Sigmoid colon (tissue), 7 donors: ENCODE measurements at regions of chr19 and their contacts with region 1.

Region 1: DNA sequence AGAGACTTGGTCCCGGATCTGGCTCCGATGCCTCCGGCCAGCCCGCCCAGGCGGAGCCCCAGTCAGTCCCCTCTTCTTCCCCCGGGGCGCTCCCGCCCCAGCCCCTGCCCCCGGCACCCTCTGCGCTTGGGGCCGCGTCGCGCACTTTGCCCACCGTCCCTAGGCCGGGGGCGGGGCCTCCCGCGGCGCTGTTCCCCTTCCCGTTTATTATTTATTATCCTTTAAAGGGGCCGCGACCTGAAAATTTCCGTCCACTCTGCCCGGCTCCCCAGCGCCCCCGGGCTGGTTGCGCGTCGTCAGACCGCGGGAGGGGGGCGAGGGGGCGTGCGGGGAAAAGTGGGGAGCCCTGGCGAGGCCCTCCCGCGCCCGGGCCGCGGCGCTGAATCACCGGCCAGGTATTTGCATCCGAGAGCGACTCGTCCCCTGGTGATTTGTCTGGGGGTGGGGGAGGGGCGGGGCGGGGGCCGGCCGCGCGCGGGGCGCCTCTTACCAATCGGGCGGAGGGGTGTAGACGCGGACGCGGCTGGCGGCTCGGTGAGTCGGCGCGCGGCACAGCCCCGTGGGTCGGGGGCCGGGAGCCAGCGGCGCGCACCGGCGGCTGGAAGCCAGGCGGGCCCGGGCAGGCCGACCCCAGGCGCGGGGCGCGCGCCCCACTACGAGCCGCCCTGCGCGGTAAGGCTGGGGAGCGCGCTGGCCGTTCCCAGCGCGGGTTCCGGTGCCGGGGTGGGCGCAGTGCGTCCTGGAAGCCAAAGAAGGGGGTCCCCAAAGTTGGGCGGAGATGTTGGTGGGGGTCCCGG is at the start of gene ARID3A:
- DNase-seq: peak; percentile 92
- H3K4me3 ChIP-seq: peak within 1 kb of the TSS; percentile 85 to 98 (median 91)
- H3K27ac ChIP-seq: peak within 1 kb of the TSS; percentile 83 to 93 (median 86)
- H3K4me1 ChIP-seq: peaks cover 0 to 43% (median 28%) of the 10 kb centered on the region in 4 donors
- H3K27me3 ChIP-seq: peaks cover 3 to 8% (median 8%) of the 10 kb centered on the region in 3 donors
- CTCF ChIP-seq: no peak
- EP300 ChIP-seq: no peak
- POLR2A ChIP-seq: no peak
- total RNA-seq, gene ARID3A: 3.1 to 11.6 (median 4.3) TPM

Region 2: GRCh38 chr19:860481-861101 is 65.1 kb before region 1 on chr19:
- intact Hi-C with region 1: loop called (anchors 1 kb)
- DNase-seq: peak; percentile 89
- H3K4me3 ChIP-seq: peak overlapping the region; percentile 16 to 45 (median 34)
- H3K27ac ChIP-seq: peak overlapping the region in 2 of 4 donors; percentile 61 to 78
- H3K4me1 ChIP-seq: peaks cover 0 to 41% (median 30%) of the 10 kb centered on the region in 4 donors
- H3K27me3 ChIP-seq: peaks cover 21 to 64% (median 42%) of the 10 kb centered on the region in 3 donors
- CTCF ChIP-seq: no peak
- EP300 ChIP-seq: no peak
- POLR2A ChIP-seq: no peak

Region 3: GRCh38 chr19:984165-984967 is 58.6 kb after region 1 on chr19 and contains the start of gene WDR18:
- intact Hi-C with region 1: loop called (anchors 1 kb)
- DNase-seq: peak; percentile 97
- H3K4me3 ChIP-seq: peak within 1 kb of the TSS; percentile 76 to 92 (median 84)
- H3K27ac ChIP-seq: peak within 1 kb of the TSS; percentile 81 to 88 (median 86)
- H3K4me1 ChIP-seq: peaks cover 0 to 29% (median 26%) of the 10 kb centered on the region in 4 donors
- H3K27me3 ChIP-seq: no peaks in the 10 kb centered on the region
- CTCF ChIP-seq: peak in 1 of 4 experiments; percentile 28
- EP300 ChIP-seq: no peak
- POLR2A ChIP-seq: peak; percentile 8 to 49
- total RNA-seq, gene WDR18: 14.3 to 33.1 (median 30.4) TPM

Region 4: GRCh38 chr19:1019980-1020867 is 94.5 kb after region 1 on chr19:
- intact Hi-C with region 1: no loop called
- DNase-seq: peak; percentile 81
- H3K4me3 ChIP-seq: peak overlapping the region; percentile 66 to 97 (median 84)
- H3K27ac ChIP-seq: peak overlapping the region; percentile 92 to 96 (median 94)
- H3K4me1 ChIP-seq: peaks cover 0 to 72% (median 61%) of the 10 kb centered on the region in 4 donors
- H3K27me3 ChIP-seq: no peaks in the 10 kb centered on the region
- CTCF ChIP-seq: no peak
- EP300 ChIP-seq: no peak
- POLR2A ChIP-seq: no peak

Region 5: DNA sequence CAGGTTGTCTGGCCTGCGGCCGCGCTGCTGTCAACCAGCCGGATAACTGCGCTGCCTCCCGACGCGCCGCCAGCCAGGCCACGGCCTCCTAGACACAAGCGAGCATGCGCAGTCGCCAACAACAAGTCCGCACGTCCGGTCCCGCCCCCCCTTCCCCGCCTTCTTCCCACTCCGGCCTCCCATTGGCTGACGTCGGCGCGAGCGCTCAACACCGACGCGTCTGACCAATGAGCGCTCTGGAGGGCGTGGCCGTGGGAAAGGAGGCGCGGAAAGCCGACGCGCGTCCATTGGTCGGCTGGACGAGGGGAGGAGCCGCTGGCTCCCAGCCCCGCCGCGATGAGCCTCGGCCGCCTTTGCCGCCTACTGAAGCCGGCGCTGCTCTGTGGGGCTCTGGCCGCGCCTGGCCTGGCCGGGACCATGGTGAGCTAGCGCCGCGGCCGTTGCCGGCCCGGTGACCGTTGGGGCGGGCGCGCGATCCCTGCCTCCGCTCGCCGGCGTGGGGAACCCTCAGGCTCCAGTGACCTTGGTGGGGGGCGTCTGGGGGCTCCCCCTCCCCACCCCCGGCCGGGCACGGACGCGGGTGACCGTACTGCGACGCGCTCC is 178.1 kb after region 1 on chr19 and contains the start of gene GPX4:
- intact Hi-C with region 1: loop called (anchors 10 kb)
- DNase-seq: peak; percentile 100
- H3K4me3 ChIP-seq: peak within 1 kb of the TSS; percentile 77 to 98 (median 94)
- H3K27ac ChIP-seq: peak within 1 kb of the TSS; percentile 98 to 100 (median 100)
- H3K4me1 ChIP-seq: peaks cover 0 to 53% (median 50%) of the 10 kb centered on the region in 4 donors
- H3K27me3 ChIP-seq: no peaks in the 10 kb centered on the region
- CTCF ChIP-seq: no peak
- EP300 ChIP-seq: peak in 1 of 4 donors; percentile 41
- POLR2A ChIP-seq: peak; percentile 82 to 88
- total RNA-seq, gene GPX4: 269 to 433 (median 371) TPM

Region 6: GRCh38 chr19:1173845-1174809 is 248.4 kb after region 1 on chr19 and contains the start of gene SBNO2:
- intact Hi-C with region 1: loop called (anchors 10 kb)
- DNase-seq: peak; percentile 96
- H3K4me3 ChIP-seq: peak within 1 kb of the TSS; percentile 49 to 97 (median 87)
- H3K27ac ChIP-seq: peak within 1 kb of the TSS; percentile 82 to 99 (median 96)
- H3K4me1 ChIP-seq: peaks cover 0 to 50% (median 40%) of the 10 kb centered on the region in 4 donors
- H3K27me3 ChIP-seq: no peaks in the 10 kb centered on the region
- CTCF ChIP-seq: no peak
- EP300 ChIP-seq: no peak
- POLR2A ChIP-seq: peak; percentile 20 to 28
- total RNA-seq, gene SBNO2: 6.8 to 91.9 (median 14.7) TPM